ENCODE measurements at regions of chr6 and their contacts with region 1.

Region 1: GRCh38 chr6:166932116-166932515 is 24.2 kb downstream of the RNASET2 start:
- DNase-seq: no peak
- H3K4me3 Mint-ChIP-seq: no peak overlapping the region
- H3K27ac Mint-ChIP-seq: peak overlapping the region; percentile 27
- H3K4me1 Mint-ChIP-seq: peaks cover 12% of the 10 kb centered on the region
- H3K27me3 Mint-ChIP-seq: no peaks in the 10 kb centered on the region

Region 2: DNA sequence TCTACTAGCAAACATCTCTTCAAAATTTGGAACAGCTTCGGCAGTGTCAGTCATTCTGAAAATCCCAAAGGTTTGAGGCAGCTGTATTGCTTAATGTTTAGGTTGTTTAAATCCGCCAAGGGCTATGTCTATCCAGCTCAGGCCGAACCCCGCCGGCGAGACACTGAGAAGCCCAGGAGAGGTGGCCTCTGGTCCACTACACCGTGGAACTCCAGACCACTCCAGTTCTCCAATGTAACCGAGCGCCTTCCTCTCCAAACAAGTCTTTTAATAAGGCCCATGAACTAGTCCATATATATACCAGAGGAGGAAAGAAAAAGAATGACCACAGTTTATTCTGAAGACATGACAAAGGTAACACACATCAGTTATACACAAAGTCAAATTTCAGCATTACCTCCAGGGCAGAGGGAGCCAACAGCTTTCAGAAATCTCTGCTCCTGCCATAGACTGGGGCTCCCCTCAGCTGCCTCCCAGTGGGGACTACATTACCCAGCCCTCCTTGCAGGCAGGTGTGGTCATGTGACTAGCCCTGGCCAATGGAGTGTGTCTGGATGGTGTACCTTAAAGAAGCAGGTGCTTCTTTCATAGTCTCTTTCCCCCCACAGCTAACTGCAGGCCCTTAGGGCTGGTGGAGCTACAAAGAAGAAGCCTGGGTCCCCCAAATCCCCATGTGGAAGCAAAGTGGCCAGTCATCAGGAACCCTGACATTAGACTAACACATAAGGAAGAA is 345.5 kb before region 1 on chr6 and contains the start of gene RAMACL:
- intact Hi-C with region 1: no loop called
- DNase-seq: peak; percentile 22
- H3K4me3 Mint-ChIP-seq: no peak within 1 kb of the TSS
- H3K27ac Mint-ChIP-seq: no peak within 1 kb of the TSS
- H3K4me1 Mint-ChIP-seq: peaks cover 15% of the 10 kb centered on the region
- H3K27me3 Mint-ChIP-seq: no peaks in the 10 kb centered on the region
- total RNA-seq, gene RAMACL: 0.29 and 0.42 TPM in 2 replicates

Region 3: GRCh38 chr6:166879594-166879993 is 52.5 kb before region 1 on chr6:
- intact Hi-C with region 1: loop called (anchors 2 kb)
- DNase-seq: no peak
- H3K4me3 Mint-ChIP-seq: no peak overlapping the region
- H3K27ac Mint-ChIP-seq: no peak overlapping the region
- H3K4me1 Mint-ChIP-seq: no peaks in the 10 kb centered on the region
- H3K27me3 Mint-ChIP-seq: peaks cover 8% of the 10 kb centered on the region

Region 4: GRCh38 chr6:166989427-166990032 is 57.4 kb after region 1 on chr6:
- intact Hi-C with region 1: no loop called
- DNase-seq: peak; percentile 39
- H3K4me3 Mint-ChIP-seq: no peak overlapping the region
- H3K27ac Mint-ChIP-seq: no peak overlapping the region
- H3K4me1 Mint-ChIP-seq: peaks cover 46% of the 10 kb centered on the region
- H3K27me3 Mint-ChIP-seq: peaks cover 1% of the 10 kb centered on the region